Dendritic cell treated with granulocyte-macrophage colony-stimulating factor and Interleukin-4, amounts not matched to agents 40 ng/mL and 50 ng/mL, for 4 days (primary cell): ENCODE measurements at regions of chr3 and their contacts with region 1.

Region 1: GRCh38 chr3:53142986-53143385 is 12.8 kb upstream of the RFT1 start:
- H3K4me3 Mint-ChIP-seq: no peak overlapping the region
- H3K27ac Mint-ChIP-seq: peak overlapping the region; percentile 88
- H3K4me1 Mint-ChIP-seq: peaks cover 88% of the 10 kb centered on the region
- H3K27me3 Mint-ChIP-seq: no peaks in the 10 kb centered on the region

Region 2: DNA sequence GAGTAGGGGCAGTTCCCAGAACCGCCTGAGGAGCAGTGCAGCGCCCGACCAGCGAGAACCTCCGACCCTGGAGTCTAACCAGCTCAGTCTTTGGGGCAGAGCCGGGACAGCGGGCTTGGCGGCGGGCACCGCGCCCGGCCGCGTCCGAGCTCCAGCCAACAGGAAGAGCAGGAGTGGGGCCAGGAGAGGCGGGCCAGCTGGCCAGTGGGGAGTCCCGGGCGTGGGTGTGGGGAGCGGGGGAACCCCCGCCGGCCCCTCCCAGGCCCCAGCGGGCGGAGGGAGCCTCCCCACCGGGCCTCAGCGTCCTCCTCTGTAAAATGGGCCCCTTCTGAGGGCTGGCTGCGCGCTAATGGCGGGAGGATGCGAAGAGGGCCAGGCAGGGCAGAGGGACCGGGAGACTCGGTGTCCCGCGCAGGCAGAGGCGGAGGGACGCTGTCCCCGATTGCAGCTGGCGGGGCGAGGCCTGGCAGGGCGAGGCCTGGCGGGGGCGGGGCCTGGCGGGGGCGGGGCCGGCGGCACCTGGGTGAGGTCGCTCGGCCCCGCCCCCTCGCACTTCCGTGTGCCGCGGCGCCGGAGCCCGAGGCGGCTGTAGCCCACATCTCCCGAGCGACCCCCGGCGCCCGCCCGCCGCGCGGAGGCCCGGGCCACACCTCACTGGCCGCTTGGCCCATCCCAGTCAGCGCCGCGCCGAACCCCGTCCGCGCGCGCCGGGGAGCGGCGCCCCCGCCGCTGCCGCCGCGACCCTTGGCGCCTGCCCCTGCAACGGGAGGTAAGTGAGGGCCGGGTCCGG is 17.9 kb after region 1 on chr3 and contains the start of gene PRKCD:
- intact Hi-C with region 1: loop called (anchors 2 kb)
- H3K4me3 Mint-ChIP-seq: peak within 1 kb of the TSS; percentile 82
- H3K27ac Mint-ChIP-seq: peak within 1 kb of the TSS; percentile 98
- H3K4me1 Mint-ChIP-seq: peaks cover 82% of the 10 kb centered on the region
- H3K27me3 Mint-ChIP-seq: peaks cover 17% of the 10 kb centered on the region

Region 3: GRCh38 chr3:53255775-53256703 is 113.1 kb after region 1 on chr3 and contains the start of gene TKT:
- intact Hi-C with region 1: no loop called
- H3K4me3 Mint-ChIP-seq: peak within 1 kb of the TSS; percentile 91
- H3K27ac Mint-ChIP-seq: peak within 1 kb of the TSS; percentile 90
- H3K4me1 Mint-ChIP-seq: peaks cover 69% of the 10 kb centered on the region
- H3K27me3 Mint-ChIP-seq: no peaks in the 10 kb centered on the region

Region 4: GRCh38 chr3:54053211-54053610 is 910.2 kb after region 1 on chr3:
- intact Hi-C with region 1: no loop called
- H3K4me3 Mint-ChIP-seq: no peak overlapping the region
- H3K27ac Mint-ChIP-seq: no peak overlapping the region
- H3K4me1 Mint-ChIP-seq: no peaks in the 10 kb centered on the region
- H3K27me3 Mint-ChIP-seq: no peaks in the 10 kb centered on the region